Lower lobe of right lung (tissue), 2 donors: ENCODE measurements at regions of chr3 and their contacts with region 1.

Region 1: GRCh38 chr3:58324391-58325390 is 8.0 kb upstream of the PXK start:
- DNase-seq: no peak
- ATAC-seq: no peak
- H3K4me3 ChIP-seq: no peak overlapping the region
- H3K27ac ChIP-seq: peak overlapping the region; percentile 50
- H3K4me1 ChIP-seq: peaks cover 11% of the 10 kb centered on the region
- H3K27me3 ChIP-seq: no peaks in the 10 kb centered on the region
- CTCF ChIP-seq: no peak

Region 2: GRCh38 chr3:58414538-58415197 is 90.0 kb after region 1 on chr3:
- intact Hi-C with region 1: loop called (anchors 10 kb)
- DNase-seq: no peak
- ATAC-seq: peak; percentile 73 to 74
- H3K4me3 ChIP-seq: no peak overlapping the region
- H3K27ac ChIP-seq: peak overlapping the region; percentile 25
- H3K4me1 ChIP-seq: peaks cover 11% of the 10 kb centered on the region
- H3K27me3 ChIP-seq: no peaks in the 10 kb centered on the region
- CTCF ChIP-seq: peak; percentile 70